ENCODE measurements at regions of chr20 and their contacts with region 1.

Region 1: DNA sequence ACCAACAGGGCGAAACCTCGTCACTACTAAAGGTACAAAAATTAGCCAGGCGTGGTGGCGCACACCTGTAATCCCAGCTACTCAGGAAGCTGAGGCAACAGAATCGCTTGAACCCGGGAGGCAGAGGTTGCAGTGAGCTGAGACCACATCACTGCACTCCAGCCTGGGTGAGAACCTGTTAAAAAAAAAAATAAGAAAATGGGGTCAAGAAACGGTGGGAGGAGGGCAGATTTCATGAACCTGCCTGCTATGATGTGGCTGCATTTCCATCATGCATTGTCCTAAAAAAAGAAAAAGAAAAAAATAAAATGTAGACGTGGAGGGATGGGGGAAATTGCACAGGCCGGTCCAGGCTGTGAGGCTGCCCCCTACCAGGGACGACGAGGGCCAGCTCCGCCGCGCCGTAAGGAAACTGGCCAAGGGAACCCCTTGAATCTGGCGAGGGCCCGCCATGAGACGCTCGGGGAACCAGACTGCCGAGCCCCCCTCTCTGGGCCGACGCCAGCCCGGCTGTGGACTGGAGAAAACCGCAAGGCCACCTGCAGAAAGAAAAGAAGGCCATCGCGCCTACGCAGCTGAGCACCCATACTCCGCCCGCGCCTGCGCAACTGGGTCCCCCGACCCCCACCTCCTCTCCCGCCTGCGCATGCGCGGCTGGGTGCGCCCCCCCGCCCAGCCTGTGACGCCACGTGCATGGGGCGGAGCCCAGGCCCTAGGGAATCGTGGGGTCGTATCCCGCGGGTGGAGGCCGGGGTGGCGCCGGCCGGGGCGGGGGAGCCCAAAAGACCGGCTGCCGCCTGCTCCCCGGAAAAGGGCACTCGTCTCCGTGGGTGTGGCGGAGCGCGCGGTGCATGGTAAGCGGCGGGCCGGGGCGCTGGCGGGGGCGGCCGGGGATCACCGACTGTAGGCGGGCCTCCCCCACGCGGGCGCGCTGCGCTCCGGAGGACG is at the start of gene ENTPD6:
- DNase-seq: peak; percentile 86 to 98 (median 94)
- ATAC-seq: peak; percentile 79
- H3K4me3 ChIP-seq: peak within 1 kb of the TSS; percentile 87 to 94
- H3K4me3 Mint-ChIP-seq: peak within 1 kb of the TSS; percentile 88
- H3K27ac ChIP-seq: peak within 1 kb of the TSS; percentile 90 to 95
- H3K27ac Mint-ChIP-seq: peak within 1 kb of the TSS; percentile 95
- H3K4me1 ChIP-seq: peaks cover 29% of the 10 kb centered on the region
- H3K4me1 Mint-ChIP-seq: peaks cover 49% of the 10 kb centered on the region
- H3K27me3 ChIP-seq: no peaks in the 10 kb centered on the region
- H3K27me3 Mint-ChIP-seq: no peaks in the 10 kb centered on the region
- CTCF ChIP-seq: no peak
- total RNA-seq, gene ENTPD6: 62.4 to 70.1 TPM

Region 2: DNA sequence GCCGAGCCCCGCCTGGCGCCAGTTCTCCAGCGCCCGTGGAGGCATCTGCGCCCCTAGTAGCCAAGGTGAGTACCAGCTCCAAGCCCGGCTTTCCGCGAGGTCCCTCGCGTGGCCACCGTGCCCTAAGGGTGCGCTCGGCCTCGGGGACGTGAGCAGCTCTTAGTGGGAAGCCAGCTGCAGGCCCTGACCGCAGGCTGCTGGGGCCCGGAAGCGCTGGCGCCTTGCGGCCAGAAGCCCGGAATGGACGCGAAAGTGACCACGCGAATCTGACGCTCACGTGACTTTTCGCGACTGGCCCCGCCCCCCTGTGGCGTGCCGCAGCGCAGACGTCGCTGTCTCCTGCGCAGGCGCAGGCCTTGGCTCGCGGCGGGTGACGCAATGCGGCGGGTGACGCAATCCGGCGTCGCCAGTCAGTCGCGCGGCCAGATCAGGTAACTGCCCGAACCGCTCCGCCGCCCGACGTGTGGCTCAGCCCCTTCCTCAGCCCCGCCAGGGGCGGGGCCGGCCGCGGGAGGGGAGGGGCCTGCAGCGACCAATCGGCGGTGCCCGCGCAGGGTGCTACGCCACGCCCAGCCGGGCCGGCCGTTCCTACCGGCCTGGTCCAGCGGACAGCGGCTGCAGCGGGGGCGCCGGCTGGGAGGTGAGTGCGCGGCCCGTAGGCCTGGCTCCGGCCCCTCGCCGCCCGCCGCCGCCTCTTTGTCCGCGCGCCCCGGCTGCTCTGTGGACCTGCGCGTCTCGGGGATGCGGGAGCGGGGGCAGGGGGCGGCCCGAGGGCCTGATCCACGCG is 1833.5 kb before region 1 on chr20 and contains the start of gene GZF1:
- CTCF ChIA-PET with region 1: no interaction called
- POLR2A ChIA-PET with region 1: no interaction called
- intact Hi-C with region 1: loop called in 1 of 2 experiments (anchors 5 kb)
- DNase-seq: peak; percentile 96 to 99 (median 98)
- ATAC-seq: peak; percentile 74
- H3K4me3 ChIP-seq: peak within 1 kb of the TSS; percentile 86 to 95
- H3K4me3 Mint-ChIP-seq: peak within 1 kb of the TSS; percentile 93
- H3K27ac ChIP-seq: peak within 1 kb of the TSS; percentile 92 to 97
- H3K27ac Mint-ChIP-seq: peak within 1 kb of the TSS; percentile 95
- H3K4me1 ChIP-seq: peaks cover 41% of the 10 kb centered on the region
- H3K4me1 Mint-ChIP-seq: peaks cover 62% of the 10 kb centered on the region
- H3K27me3 ChIP-seq: no peaks in the 10 kb centered on the region
- H3K27me3 Mint-ChIP-seq: no peaks in the 10 kb centered on the region
- CTCF ChIP-seq: peak; percentile 43
- total RNA-seq, gene GZF1: 44.9 to 49.5 TPM

Region 3: GRCh38 chr20:24523661-24524060 is 671.6 kb before region 1 on chr20:
- CTCF ChIA-PET with region 1: no interaction called
- POLR2A ChIA-PET with region 1: no interaction called
- intact Hi-C with region 1: no loop called
- DNase-seq: no peak
- ATAC-seq: no peak
- H3K4me3 ChIP-seq: no peak overlapping the region
- H3K4me3 Mint-ChIP-seq: no peak overlapping the region
- H3K27ac ChIP-seq: no peak overlapping the region
- H3K27ac Mint-ChIP-seq: no peak overlapping the region
- H3K4me1 ChIP-seq: no peaks in the 10 kb centered on the region
- H3K4me1 Mint-ChIP-seq: no peaks in the 10 kb centered on the region
- H3K27me3 ChIP-seq: no peaks in the 10 kb centered on the region
- H3K27me3 Mint-ChIP-seq: no peaks in the 10 kb centered on the region
- CTCF ChIP-seq: no peak

Region 4: DNA sequence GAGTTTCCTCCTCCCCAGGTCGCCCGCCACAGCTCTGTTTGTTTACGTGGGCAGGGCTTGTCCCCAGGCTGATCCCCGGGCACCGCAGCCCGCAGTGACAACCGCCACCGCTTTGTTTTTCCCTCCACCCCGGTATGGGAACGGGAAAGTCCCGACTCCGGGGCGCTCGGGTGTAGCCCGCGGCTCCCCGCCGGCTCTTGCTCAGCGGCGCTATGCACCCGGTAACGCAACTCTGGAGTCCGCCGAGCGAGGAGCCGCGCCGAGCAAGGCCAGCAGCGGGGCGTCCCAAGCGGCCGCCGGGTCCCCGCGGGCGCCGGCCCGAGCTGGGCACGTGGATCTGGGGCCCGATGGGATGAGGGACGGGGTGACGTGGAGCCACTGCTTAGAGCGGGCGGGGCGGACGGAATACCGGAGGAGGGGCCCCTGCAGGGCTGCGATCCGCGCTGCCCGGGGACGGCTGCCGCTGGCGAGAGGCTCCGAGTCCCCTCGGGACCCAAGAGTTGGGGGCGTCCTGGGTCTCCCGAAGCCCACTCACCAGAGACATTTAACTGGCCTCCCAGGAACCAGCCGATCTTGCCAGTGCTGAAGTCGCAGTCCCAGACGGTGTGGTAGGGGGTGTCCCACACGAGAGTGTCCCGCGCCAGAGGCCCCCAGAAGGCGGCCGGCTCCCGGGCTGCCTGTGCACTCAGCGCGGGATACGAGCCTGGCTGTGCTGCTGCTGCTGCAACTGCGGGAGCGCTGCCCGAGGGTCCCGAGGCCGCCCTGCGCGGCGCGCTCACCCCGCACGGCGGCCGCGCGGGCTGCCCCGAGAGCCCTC is 137.8 kb before region 1 on chr20:
- CTCF ChIA-PET with region 1: interaction called, 4 read pairs
- POLR2A ChIA-PET with region 1: interaction called, 18 read pairs
- intact Hi-C with region 1: loop called in 1 of 2 experiments (anchors 5 kb)
- DNase-seq: peak; percentile 62 to 94 (median 81)
- ATAC-seq: peak; percentile 33
- H3K4me3 ChIP-seq: peak overlapping the region; percentile 62 to 90
- H3K4me3 Mint-ChIP-seq: peak overlapping the region; percentile 87
- H3K27ac ChIP-seq: peak overlapping the region; percentile 71 to 83
- H3K27ac Mint-ChIP-seq: peak overlapping the region; percentile 95
- H3K4me1 ChIP-seq: peaks cover 52% of the 10 kb centered on the region
- H3K4me1 Mint-ChIP-seq: peaks cover 52% of the 10 kb centered on the region
- H3K27me3 ChIP-seq: no peaks in the 10 kb centered on the region
- H3K27me3 Mint-ChIP-seq: no peaks in the 10 kb centered on the region
- CTCF ChIP-seq: no peak

Region 5: GRCh38 chr20:25090492-25091429 is 104.5 kb before region 1 on chr20:
- CTCF ChIA-PET with region 1: no interaction called
- POLR2A ChIA-PET with region 1: interaction called, 13 read pairs
- intact Hi-C with region 1: loop called in 1 of 2 experiments (anchors 5 kb)
- DNase-seq: peak; percentile 30 to 93 (median 77)
- ATAC-seq: peak; percentile 97
- H3K4me3 ChIP-seq: peak overlapping the region in 1 of 2 experiments; percentile 1
- H3K4me3 Mint-ChIP-seq: peak overlapping the region; percentile 53
- H3K27ac ChIP-seq: peak overlapping the region in 1 of 2 experiments; percentile 44
- H3K27ac Mint-ChIP-seq: peak overlapping the region; percentile 84
- H3K4me1 ChIP-seq: peaks cover 29% of the 10 kb centered on the region
- H3K4me1 Mint-ChIP-seq: peaks cover 34% of the 10 kb centered on the region
- H3K27me3 ChIP-seq: no peaks in the 10 kb centered on the region
- H3K27me3 Mint-ChIP-seq: peaks cover 6% of the 10 kb centered on the region
- CTCF ChIP-seq: no peak

Region 6: DNA sequence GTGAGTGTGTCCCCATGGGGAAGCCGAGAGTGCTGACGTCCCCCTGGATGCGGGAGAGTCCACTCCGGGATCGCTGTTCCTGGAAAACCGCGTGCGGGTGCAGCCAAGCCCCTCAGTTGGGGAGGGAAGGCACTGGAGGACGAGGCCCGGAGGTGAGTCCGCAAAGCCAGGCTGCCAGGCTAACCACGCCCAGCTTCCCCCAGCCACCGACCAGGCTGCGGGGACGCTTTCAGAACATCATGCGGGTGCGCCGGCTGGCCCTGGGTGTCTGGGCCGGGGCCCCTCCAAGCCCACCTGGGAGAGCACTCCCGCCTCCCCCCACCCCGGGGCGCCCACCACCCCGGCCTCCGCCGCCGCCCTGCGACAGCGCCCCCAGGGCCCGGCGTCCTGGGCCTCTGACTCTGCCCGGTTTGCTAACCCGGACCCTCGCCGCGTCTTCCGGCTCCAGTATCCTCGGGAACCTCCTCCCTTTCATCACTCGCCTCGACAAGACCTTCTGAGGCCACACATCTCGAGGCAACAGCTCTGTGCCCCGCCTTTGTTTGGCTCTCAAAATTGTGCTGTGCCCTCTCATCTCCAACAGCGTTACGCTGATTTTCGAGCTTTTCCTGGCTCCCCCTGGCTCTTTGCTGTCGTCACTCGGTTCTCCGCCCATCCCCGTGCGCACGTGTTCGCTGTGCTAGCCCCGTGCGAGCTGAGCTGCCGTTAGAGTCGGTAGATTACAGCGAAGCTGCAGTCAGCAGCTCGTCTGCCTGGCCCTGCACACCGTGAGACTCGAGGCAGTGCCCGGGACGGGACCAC is 46.9 kb before region 1 on chr20:
- CTCF ChIA-PET with region 1: no interaction called
- POLR2A ChIA-PET with region 1: interaction called, 5 read pairs
- intact Hi-C with region 1: loop called (anchors 1 to 5 kb)
- DNase-seq: peak; percentile 22 to 83 (median 73)
- ATAC-seq: peak; percentile 97
- H3K4me3 ChIP-seq: peak overlapping the region; percentile 47 to 49
- H3K4me3 Mint-ChIP-seq: peak overlapping the region; percentile 89
- H3K27ac ChIP-seq: peak overlapping the region in 1 of 2 experiments; percentile 3
- H3K27ac Mint-ChIP-seq: peak overlapping the region; percentile 86
- H3K4me1 ChIP-seq: peaks cover 7% of the 10 kb centered on the region
- H3K4me1 Mint-ChIP-seq: peaks cover 8% of the 10 kb centered on the region
- H3K27me3 ChIP-seq: no peaks in the 10 kb centered on the region
- H3K27me3 Mint-ChIP-seq: peaks cover 4% of the 10 kb centered on the region
- CTCF ChIP-seq: no peak

Region 7: GRCh38 chr20:25247956-25248785 is 52.9 kb after region 1 on chr20 and contains the start of gene PYGB:
- CTCF ChIA-PET with region 1: no interaction called
- POLR2A ChIA-PET with region 1: interaction called, 20 read pairs
- intact Hi-C with region 1: loop called (anchors 1 to 2 kb)
- DNase-seq: peak; percentile 65 to 87 (median 70)
- ATAC-seq: peak; percentile 88
- H3K4me3 ChIP-seq: peak within 1 kb of the TSS; percentile 97 to 99
- H3K4me3 Mint-ChIP-seq: peak within 1 kb of the TSS; percentile 93
- H3K27ac ChIP-seq: peak within 1 kb of the TSS; percentile 53 to 80
- H3K27ac Mint-ChIP-seq: peak within 1 kb of the TSS; percentile 91
- H3K4me1 ChIP-seq: peaks cover 29% of the 10 kb centered on the region
- H3K4me1 Mint-ChIP-seq: peaks cover 54% of the 10 kb centered on the region
- H3K27me3 ChIP-seq: no peaks in the 10 kb centered on the region
- H3K27me3 Mint-ChIP-seq: no peaks in the 10 kb centered on the region
- CTCF ChIP-seq: no peak
- total RNA-seq, gene PYGB: 35.2 to 39.2 TPM

Region 8: DNA sequence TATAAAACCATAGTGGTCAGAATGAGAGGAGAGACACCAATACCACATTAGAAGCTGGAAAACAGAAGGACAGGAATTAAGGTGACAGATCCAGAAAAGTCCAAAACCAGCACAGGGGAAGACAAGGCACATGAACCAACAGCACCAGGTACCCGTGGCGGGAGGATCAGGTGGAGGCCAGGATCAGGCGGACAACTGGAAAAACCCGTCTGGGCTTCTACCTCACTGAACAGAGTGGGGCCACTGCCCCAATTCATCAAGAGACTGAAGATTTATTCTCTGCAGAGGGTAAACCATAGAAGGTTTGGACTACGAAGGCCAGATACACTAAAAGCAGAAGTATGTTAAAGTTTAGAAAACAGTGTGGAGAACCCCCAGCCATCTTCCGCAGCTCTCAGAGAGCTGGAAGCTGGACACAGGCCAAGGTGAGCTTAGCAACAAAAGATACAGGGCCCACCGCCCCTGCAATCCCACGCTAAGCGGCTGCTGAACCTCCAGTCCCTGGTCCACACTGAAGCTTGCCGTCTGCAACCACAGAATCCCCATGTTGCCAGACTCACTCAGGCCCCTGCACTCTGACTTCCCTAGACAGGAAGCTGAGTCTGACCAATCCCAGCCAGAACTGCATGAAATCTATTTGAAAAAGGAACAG is 165.5 kb after region 1 on chr20:
- CTCF ChIA-PET with region 1: no interaction called
- POLR2A ChIA-PET with region 1: no interaction called
- intact Hi-C with region 1: no loop called
- DNase-seq: no peak
- ATAC-seq: no peak
- H3K4me3 ChIP-seq: no peak overlapping the region
- H3K4me3 Mint-ChIP-seq: no peak overlapping the region
- H3K27ac ChIP-seq: no peak overlapping the region
- H3K27ac Mint-ChIP-seq: no peak overlapping the region
- H3K4me1 ChIP-seq: no peaks in the 10 kb centered on the region
- H3K4me1 Mint-ChIP-seq: peaks cover 27% of the 10 kb centered on the region
- H3K27me3 ChIP-seq: no peaks in the 10 kb centered on the region
- H3K27me3 Mint-ChIP-seq: no peaks in the 10 kb centered on the region
- CTCF ChIP-seq: no peak

Region 9: GRCh38 chr20:25390538-25391528 is 195.5 kb after region 1 on chr20 and contains the start of gene ABHD12:
- CTCF ChIA-PET with region 1: no interaction called
- POLR2A ChIA-PET with region 1: interaction called, 6 read pairs
- intact Hi-C with region 1: loop called (anchors 1 to 5 kb)
- DNase-seq: peak; percentile 88 to 96 (median 92)
- ATAC-seq: peak; percentile 91
- H3K4me3 ChIP-seq: peak within 1 kb of the TSS; percentile 55 to 70
- H3K4me3 Mint-ChIP-seq: peak within 1 kb of the TSS; percentile 85
- H3K27ac ChIP-seq: peak within 1 kb of the TSS; percentile 47 to 51
- H3K27ac Mint-ChIP-seq: peak within 1 kb of the TSS; percentile 84
- H3K4me1 ChIP-seq: peaks cover 5% of the 10 kb centered on the region
- H3K4me1 Mint-ChIP-seq: peaks cover 20% of the 10 kb centered on the region
- H3K27me3 ChIP-seq: no peaks in the 10 kb centered on the region
- H3K27me3 Mint-ChIP-seq: no peaks in the 10 kb centered on the region
- CTCF ChIP-seq: no peak
- total RNA-seq, gene ABHD12: 14.1 to 17.9 TPM

Region 10: DNA sequence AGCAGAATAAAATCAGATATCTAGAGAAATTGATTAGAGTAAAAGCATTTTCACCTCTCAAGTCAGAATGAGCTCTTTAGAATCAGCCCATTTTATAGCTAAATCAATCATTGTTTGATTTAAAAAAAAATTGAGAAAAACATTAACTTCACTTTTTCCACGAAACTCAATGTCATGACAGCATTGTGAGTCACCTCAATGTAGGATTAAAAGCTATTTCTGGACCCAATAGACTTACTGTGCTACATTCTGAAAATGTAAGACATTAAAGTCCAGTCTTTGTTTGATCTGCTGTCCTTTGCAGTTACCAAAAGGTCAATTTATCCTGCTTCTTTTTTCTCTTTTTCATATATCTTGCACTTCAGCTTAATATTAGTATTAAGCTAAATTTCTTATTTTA is 1020.7 kb after region 1 on chr20:
- CTCF ChIA-PET with region 1: no interaction called
- POLR2A ChIA-PET with region 1: no interaction called
- intact Hi-C with region 1: no loop called
- DNase-seq: no peak
- ATAC-seq: no peak
- H3K4me3 ChIP-seq: no peak overlapping the region
- H3K4me3 Mint-ChIP-seq: no peak overlapping the region
- H3K27ac ChIP-seq: no peak overlapping the region
- H3K27ac Mint-ChIP-seq: no peak overlapping the region
- H3K4me1 ChIP-seq: no peaks in the 10 kb centered on the region
- H3K4me1 Mint-ChIP-seq: no peaks in the 10 kb centered on the region
- H3K27me3 ChIP-seq: no peaks in the 10 kb centered on the region
- H3K27me3 Mint-ChIP-seq: no peaks in the 10 kb centered on the region
- CTCF ChIP-seq: no peak

Measured in CD8-positive, alpha-beta T cell (primary cell).